Keratinocyte (primary cell): ENCODE measurements at regions of chr2 and their contacts with region 1.

Region 1: GRCh38 chr2:75403991-75404428 is 156.7 kb downstream of the EVA1A start:
- DNase-seq: no peak
- H3K4me3 ChIP-seq: no peak overlapping the region
- H3K27ac ChIP-seq: no peak overlapping the region
- H3K4me1 ChIP-seq: no peaks in the 10 kb centered on the region
- H3K27me3 ChIP-seq: no peaks in the 10 kb centered on the region
- CTCF ChIP-seq: peak; percentile 67 to 77 (median 68)

Region 2: DNA sequence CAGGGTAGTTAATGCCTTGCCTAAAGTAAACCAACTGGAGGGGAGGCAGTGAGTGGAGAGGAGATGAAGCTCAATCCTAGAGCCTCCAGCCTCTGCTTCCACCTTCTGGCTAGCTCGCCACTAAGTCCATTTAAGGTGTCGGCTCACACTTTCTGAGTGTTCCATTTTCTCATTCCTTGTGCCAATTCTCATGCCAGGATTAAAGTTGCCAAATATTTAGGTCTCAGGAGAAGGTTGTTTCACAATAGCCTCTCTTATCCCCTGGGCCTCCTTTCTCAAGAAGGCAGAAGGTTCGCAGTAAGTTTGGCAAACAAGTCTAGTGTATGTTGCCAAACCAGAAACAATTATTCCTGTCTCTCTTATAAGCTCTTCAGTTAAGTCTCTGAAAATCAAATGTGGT is 261.9 kb before region 1 on chr2:
- dilution Hi-C with region 1: no loop called
- DNase-seq: no peak
- H3K4me3 ChIP-seq: no peak overlapping the region
- H3K27ac ChIP-seq: no peak overlapping the region
- H3K4me1 ChIP-seq: no peaks in the 10 kb centered on the region
- H3K27me3 ChIP-seq: peaks cover 17% of the 10 kb centered on the region
- CTCF ChIP-seq: no peak

Region 3: DNA sequence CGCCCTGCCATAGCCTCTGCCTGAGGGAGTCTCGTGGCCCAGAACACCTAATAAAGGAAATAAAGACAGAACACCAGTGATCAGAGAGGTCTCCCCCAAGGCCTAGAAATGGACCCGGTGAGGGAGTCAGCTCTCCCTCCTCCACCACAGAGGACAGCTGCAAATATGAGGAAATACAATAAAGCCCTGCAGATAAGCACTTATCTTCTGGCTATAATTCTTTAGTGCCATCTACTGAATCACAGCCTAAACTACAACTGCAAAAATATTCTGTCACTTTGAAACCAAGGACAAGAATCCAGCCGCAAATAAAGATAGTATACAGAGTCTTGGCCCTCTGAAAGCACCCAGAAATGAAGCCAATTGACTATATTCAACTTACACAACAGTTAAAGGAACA is 162.3 kb before region 1 on chr2:
- dilution Hi-C with region 1: loop called (anchors 25 kb)
- DNase-seq: no peak
- H3K4me3 ChIP-seq: no peak overlapping the region
- H3K27ac ChIP-seq: no peak overlapping the region
- H3K4me1 ChIP-seq: peaks cover 9% of the 10 kb centered on the region
- H3K27me3 ChIP-seq: no peaks in the 10 kb centered on the region
- CTCF ChIP-seq: peak in 1 of 3 experiments; percentile 31

Region 4: DNA sequence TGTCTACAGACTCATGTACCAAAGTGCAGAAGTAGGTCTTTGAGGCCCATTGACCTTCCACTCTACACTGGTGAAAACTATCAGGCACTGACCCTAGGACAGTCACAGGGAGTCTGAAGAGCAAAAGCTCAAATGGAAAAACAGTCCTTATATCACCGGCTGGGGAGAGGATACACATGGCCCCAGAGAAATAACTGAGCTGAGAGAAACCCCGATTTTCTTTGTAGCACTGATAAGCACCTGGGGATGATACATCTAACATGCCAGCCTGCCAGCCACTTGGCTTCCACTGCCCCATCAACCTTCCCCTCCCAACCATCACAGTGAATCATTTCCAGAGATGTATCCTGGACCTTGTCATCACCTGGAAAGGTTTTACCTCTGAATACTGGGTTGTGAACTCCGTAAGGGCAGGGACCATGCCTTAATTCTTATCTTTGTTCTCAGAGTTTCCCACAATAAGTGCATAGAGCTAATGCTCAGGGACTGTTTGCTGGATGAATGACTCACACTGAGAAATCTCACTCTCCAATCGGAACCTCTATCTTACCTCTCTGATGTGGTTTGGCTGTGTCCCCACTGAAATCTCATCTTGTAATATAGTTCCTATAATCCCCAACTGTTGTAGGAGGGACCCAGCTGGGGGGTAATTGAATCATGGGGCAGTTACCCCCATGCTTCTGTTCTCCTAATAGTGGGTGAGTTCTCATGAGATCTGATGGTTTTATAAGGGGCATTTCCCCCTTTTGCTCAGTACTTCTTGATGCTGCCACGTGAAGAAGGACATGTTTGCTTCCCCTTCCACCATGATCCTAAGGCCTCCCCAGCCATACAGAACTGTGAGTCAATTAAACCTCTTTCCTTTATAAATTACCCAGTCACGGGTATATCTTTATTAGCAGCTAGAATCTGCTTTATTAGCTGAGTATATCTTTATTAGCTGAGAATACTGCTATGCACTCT is 119.6 kb after region 1 on chr2:
- dilution Hi-C with region 1: no loop called
- DNase-seq: peak; percentile 80
- H3K4me3 ChIP-seq: no peak overlapping the region
- H3K27ac ChIP-seq: no peak overlapping the region
- H3K4me1 ChIP-seq: peaks cover 54% of the 10 kb centered on the region
- H3K27me3 ChIP-seq: no peaks in the 10 kb centered on the region
- CTCF ChIP-seq: no peak

Region 5: DNA sequence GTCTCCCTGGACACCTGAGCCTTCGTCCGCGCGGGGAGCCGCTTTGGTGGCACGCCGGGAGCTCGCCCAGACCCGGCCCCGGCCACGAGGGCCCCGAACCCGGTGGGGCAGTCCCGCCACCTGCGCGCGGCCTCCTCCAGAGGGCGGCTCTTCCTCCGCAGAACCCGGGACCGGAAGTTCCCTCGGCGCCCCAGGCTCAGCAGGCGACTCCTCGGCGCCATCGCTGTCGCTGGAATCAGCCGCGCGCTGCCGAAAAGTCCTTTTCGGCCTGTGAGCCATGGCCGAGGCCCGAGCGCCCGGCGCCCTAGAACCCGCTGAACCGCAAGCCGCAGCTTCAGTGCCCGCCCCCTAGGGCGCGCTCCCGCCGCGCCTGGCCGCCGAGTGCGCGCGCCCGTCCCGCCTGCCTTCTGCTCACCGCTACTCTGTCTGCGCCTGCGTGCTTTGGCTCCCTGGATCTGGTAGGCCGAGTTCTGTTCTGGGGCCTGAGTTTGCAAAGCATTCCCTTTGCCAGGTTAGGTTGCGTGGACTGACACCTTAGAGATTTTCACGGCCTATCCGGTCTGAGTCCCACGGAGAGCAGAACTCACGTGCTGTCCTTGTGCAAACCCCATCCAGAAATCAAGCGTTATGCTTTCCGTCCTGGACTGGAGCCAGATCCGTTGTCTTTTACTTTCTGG is 306.7 kb after region 1 on chr2 and contains the start of gene GCFC2:
- dilution Hi-C with region 1: no loop called
- DNase-seq: peak; percentile 33
- H3K4me3 ChIP-seq: peak within 1 kb of the TSS; percentile 55 to 90 (median 77)
- H3K27ac ChIP-seq: peak within 1 kb of the TSS; percentile 83
- H3K4me1 ChIP-seq: peaks cover 12% of the 10 kb centered on the region
- H3K27me3 ChIP-seq: no peaks in the 10 kb centered on the region
- CTCF ChIP-seq: peak in 2 of 3 experiments; percentile 46 to 53
- polyA plus RNA-seq, gene GCFC2: 9.0 to 17.0 TPM (median 9.1 TPM) in 3 replicates